HCT116 (cell line): ENCODE measurements at regions of chr16 and their contacts with region 1.

Region 1: DNA sequence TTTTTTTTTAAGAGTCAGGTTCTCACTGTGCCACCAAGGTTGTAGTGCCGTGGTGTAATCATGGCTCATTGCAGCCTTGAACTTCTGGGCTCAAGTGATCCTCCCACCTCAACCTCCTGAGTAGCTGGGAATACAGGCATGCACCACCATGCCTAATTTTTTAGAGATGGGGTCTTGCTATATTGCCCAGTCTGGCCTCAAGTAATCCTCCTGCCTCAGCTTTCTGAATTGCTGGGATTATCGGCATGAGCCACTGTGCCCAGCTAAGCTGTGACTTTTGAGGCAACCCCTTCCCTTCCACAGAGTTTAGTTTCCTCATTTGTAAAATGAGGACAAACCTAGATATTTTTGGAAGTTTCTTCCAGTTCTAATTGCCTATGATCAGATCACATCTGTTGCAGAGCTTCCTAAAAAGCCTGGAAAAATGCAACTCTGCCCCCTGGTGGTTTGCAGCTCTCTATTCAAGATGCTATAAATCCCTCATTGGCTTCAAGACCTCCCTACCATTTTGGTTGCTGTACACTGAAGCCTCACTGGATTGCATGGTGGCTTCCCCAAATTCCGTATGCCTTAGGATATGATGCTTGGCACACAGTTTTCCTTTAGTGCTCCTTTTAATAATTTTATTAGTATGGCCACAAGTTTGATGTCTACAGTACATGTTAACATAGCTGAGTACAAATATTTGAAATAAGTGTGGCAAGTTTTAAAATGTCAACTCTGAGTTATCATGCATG is 19.3 kb downstream of the GDE1 start:
- DNase-seq: peak; percentile 73
- ATAC-seq: peak; percentile 95
- H3K4me3 ChIP-seq: no peak overlapping the region
- H3K27ac ChIP-seq: no peak overlapping the region
- H3K4me1 ChIP-seq: peaks cover 3 to 7% of the 10 kb centered on the region in 2 experiments; a peak in 2 of 4 replicates
- H3K27me3 ChIP-seq: no peaks in the 10 kb centered on the region
- CTCF ChIP-seq: peak; percentile 78 to 86 (median 81)
- POLR2A ChIP-seq: no peak
- RAD21 ChIP-seq: peak; percentile 90

Region 2: GRCh38 chr16:19086322-19087199 is 416.0 kb before region 1 on chr16:
- CTCF ChIA-PET with region 1: interaction called, 17 read pairs
- POLR2A ChIA-PET with region 1: no interaction called
- RAD21 ChIA-PET with region 1: interaction called in 1 of 2 experiments, 3 read pairs
- intact Hi-C with region 1: loop called (anchors 2 kb)
- DNase-seq: peak; percentile 90
- ATAC-seq: peak; percentile 98
- H3K4me3 ChIP-seq: peak overlapping the region; percentile 50 to 63
- H3K27ac ChIP-seq: peak overlapping the region; percentile 18; the same call in 1 of the 2 replicates
- H3K4me1 ChIP-seq: peaks cover 9 to 23% of the 10 kb centered on the region in 2 experiments
- H3K27me3 ChIP-seq: no peaks in the 10 kb centered on the region
- CTCF ChIP-seq: peak; percentile 94 to 98 (median 98)
- POLR2A ChIP-seq: peak; percentile 97
- RAD21 ChIP-seq: peak; percentile 100

Region 3: GRCh38 chr16:19167710-19168370 is 334.7 kb before region 1 on chr16 and contains the start of gene SYT17:
- CTCF ChIA-PET with region 1: no interaction called
- POLR2A ChIA-PET with region 1: no interaction called
- RAD21 ChIA-PET with region 1: no interaction called
- intact Hi-C with region 1: loop called (anchors 5 kb)
- DNase-seq: peak; percentile 60
- ATAC-seq: peak; percentile 92
- H3K4me3 ChIP-seq: peak within 1 kb of the TSS; percentile 69 to 78
- H3K27ac ChIP-seq: peak within 1 kb of the TSS; percentile 72
- H3K4me1 ChIP-seq: peaks cover 4 to 36% of the 10 kb centered on the region in 2 experiments; a peak in 3 of 4 replicates
- H3K27me3 ChIP-seq: no peaks in the 10 kb centered on the region
- CTCF ChIP-seq: peak; percentile 68 to 95 (median 69)
- POLR2A ChIP-seq: no peak
- RAD21 ChIP-seq: peak; percentile 81
- total RNA-seq, gene SYT17: 10.3 TPM

Region 4: DNA sequence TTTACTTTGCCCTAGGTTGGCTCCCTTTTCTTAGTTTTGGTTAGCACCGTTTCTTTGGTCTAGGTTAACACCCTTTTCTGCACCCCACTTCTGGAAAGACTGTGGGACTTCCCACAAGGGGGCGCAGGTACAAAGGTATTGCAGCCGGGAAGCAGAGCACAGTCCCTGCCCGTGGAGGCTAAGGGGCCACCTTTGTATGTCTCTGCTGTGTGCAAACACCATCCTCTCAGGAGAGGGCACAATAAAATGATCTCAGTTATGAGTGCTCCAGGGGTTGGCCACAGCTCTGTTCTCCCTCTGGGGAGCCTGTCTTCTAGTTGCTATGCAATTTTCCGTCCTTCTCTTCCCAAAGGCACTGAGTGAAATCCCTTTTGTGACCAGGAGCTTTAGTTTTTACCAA is 113.3 kb before region 1 on chr16:
- CTCF ChIA-PET with region 1: interaction called, 7 read pairs
- POLR2A ChIA-PET with region 1: no interaction called
- RAD21 ChIA-PET with region 1: interaction called in 1 of 2 experiments, 3 read pairs
- intact Hi-C with region 1: loop called (anchors 1 kb)
- DNase-seq: no peak
- ATAC-seq: peak; percentile 59
- H3K4me3 ChIP-seq: no peak overlapping the region
- H3K27ac ChIP-seq: no peak overlapping the region
- H3K4me1 ChIP-seq: peaks cover 39 to 55% of the 10 kb centered on the region in 2 experiments
- H3K27me3 ChIP-seq: no peaks in the 10 kb centered on the region
- CTCF ChIP-seq: peak; percentile 58 to 67 (median 63); a peak in 5 of 6 replicates
- POLR2A ChIP-seq: no peak
- RAD21 ChIP-seq: peak; percentile 85

Region 5: DNA sequence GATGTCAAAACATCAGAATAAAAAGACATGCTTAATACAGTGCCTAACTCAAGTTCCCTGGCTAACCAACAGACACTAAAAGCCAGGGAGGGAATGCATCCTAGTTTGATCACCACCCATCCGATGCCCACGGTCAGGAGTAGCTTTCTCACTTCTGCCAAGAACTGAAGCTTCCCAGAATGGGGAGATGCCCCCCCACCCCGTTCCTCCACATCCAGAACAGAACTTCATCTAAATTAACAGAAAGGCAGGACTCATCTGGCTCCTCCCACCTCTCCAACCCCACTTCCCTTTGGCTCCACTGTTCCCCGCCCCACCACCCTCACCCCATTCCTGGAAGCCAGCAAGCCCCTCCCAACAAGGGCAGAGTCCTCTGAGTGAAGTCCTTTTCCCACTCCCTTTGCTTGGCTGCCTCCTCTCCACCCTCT is 14.3 kb before region 1 on chr16:
- CTCF ChIA-PET with region 1: interaction called, 10 read pairs
- POLR2A ChIA-PET with region 1: no interaction called
- RAD21 ChIA-PET with region 1: no interaction called
- intact Hi-C with region 1: no loop called
- DNase-seq: no peak
- ATAC-seq: no peak
- H3K4me3 ChIP-seq: no peak overlapping the region
- H3K27ac ChIP-seq: no peak overlapping the region
- H3K4me1 ChIP-seq: peaks cover 0 to 15% of the 10 kb centered on the region in 2 experiments; a peak in 2 of 4 replicates
- H3K27me3 ChIP-seq: no peaks in the 10 kb centered on the region
- CTCF ChIP-seq: no peak
- POLR2A ChIP-seq: no peak
- RAD21 ChIP-seq: no peak